Gastrocnemius medialis (tissue), 4 donors: ENCODE measurements at regions of chr1 and their contacts with region 1.

Region 1: GRCh38 chr1:35030756-35031446 is 844 bp downstream of the ZMYM6 start:
- DNase-seq: no peak
- ATAC-seq: peak; percentile 23
- H3K4me3 ChIP-seq: peak overlapping the region; percentile 60 to 98 (median 86)
- H3K27ac ChIP-seq: peak overlapping the region; percentile 85 to 93 (median 90)
- H3K4me1 ChIP-seq: peaks cover 13 to 23% of the 10 kb centered on the region in 2 donors
- H3K27me3 ChIP-seq: no peaks in the 10 kb centered on the region
- CTCF ChIP-seq: no peak
- POLR2A ChIP-seq: no peak

Region 2: GRCh38 chr1:34852677-34853217 is 178.2 kb before region 1 on chr1:
- in situ Hi-C with region 1: no loop called
- intact Hi-C with region 1: loop called (anchors 10 kb)
- DNase-seq: peak; percentile 40 to 83
- ATAC-seq: peak; percentile 87 to 97
- H3K4me3 ChIP-seq: no peak overlapping the region
- H3K27ac ChIP-seq: peak overlapping the region; percentile 50 to 74 (median 60)
- H3K4me1 ChIP-seq: peaks cover 10 to 22% of the 10 kb centered on the region in 2 donors
- H3K27me3 ChIP-seq: no peaks in the 10 kb centered on the region
- CTCF ChIP-seq: peak; percentile 81 to 90 (median 86)
- POLR2A ChIP-seq: no peak

Region 3: GRCh38 chr1:34907487-34908090 is 123.3 kb before region 1 on chr1:
- in situ Hi-C with region 1: no loop called
- intact Hi-C with region 1: no loop called
- DNase-seq: no peak
- ATAC-seq: no peak
- H3K4me3 ChIP-seq: no peak overlapping the region
- H3K27ac ChIP-seq: no peak overlapping the region
- H3K4me1 ChIP-seq: no peaks in the 10 kb centered on the region
- H3K27me3 ChIP-seq: no peaks in the 10 kb centered on the region
- CTCF ChIP-seq: no peak
- POLR2A ChIP-seq: no peak

Region 4: GRCh38 chr1:35079003-35079930 is 48.4 kb after region 1 on chr1 and contains the start of gene ZMYM1:
- in situ Hi-C with region 1: no loop called
- intact Hi-C with region 1: loop called (anchors 2 kb)
- DNase-seq: peak; percentile 58 to 62
- ATAC-seq: peak; percentile 80 to 88
- H3K4me3 ChIP-seq: peak within 1 kb of the TSS; percentile 59 to 80 (median 71)
- H3K27ac ChIP-seq: peak within 1 kb of the TSS; percentile 76 to 80 (median 80)
- H3K4me1 ChIP-seq: peaks cover 12 to 15% of the 10 kb centered on the region in 2 donors
- H3K27me3 ChIP-seq: no peaks in the 10 kb centered on the region
- CTCF ChIP-seq: no peak
- POLR2A ChIP-seq: peak; percentile 18 to 38
- total RNA-seq, gene ZMYM1: 1.8 to 7.6 (median 3.6) TPM

Region 5: GRCh38 chr1:35097224-35097623 is 66.3 kb after region 1 on chr1:
- in situ Hi-C with region 1: loop called in 1 of 4 experiments (anchors 10 kb)
- intact Hi-C with region 1: no loop called
- DNase-seq: no peak
- ATAC-seq: no peak
- H3K4me3 ChIP-seq: no peak overlapping the region
- H3K27ac ChIP-seq: no peak overlapping the region
- H3K4me1 ChIP-seq: no peaks in the 10 kb centered on the region
- H3K27me3 ChIP-seq: no peaks in the 10 kb centered on the region
- CTCF ChIP-seq: no peak
- POLR2A ChIP-seq: no peak